Activated CD4-positive, alpha-beta T cell treated with anti-CD3 and anti-CD28 coated beads for 36 hours (primary cell): ENCODE measurements at regions of chr6 and their contacts with region 1.

Region 1: DNA sequence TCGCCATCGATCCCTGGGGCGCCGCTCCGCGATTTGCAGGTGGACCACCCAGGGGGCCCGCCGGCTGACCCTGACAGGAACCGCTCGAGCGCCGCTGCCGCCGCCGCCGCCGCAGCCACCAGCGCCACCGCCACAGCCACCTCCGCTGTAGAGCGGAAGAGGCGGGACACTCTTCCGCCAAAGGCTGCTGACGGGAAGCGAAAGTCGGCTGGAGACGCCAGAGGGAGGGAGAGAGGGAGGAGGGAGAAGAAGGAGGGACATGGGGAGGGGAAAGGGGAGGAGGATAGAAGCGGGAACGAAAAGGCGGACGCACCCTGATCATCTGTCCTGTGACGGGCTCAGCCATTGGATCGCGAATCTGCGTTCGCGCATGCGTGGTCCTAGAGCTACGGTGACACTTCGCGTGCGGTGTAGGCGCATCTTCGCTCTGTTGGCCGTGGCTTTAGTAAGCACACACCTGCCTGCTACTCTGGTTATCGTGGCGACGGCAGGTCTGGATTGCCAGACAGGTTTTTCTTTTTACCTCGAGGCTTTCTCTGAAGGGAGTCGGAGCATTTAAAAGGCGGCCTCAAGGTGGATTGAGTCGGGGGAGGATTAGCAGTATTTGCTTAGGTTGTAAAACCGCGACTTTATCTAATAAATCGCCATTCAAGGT is at the start of gene TMEM30A:
- DNase-seq: peak; percentile 98
- ATAC-seq: peak; percentile 97
- H3K4me3 Mint-ChIP-seq: no peak within 1 kb of the TSS
- H3K27ac Mint-ChIP-seq: no peak within 1 kb of the TSS
- H3K4me1 Mint-ChIP-seq: peaks cover 48% of the 10 kb centered on the region
- H3K27me3 Mint-ChIP-seq: no peaks in the 10 kb centered on the region
- total RNA-seq, gene TMEM30A: 23.4 to 44.3 TPM

Region 2: GRCh38 chr6:73580247-73581149 is 1704.3 kb before region 1 on chr6:
- CTCF ChIA-PET with region 1: no interaction called
- POLR2A ChIA-PET with region 1: no interaction called
- intact Hi-C with region 1: loop called in 1 of 2 experiments (anchors 10 kb)
- DNase-seq: peak; percentile 89
- ATAC-seq: peak; percentile 92
- H3K4me3 Mint-ChIP-seq: peak overlapping the region; percentile 60
- H3K27ac Mint-ChIP-seq: peak overlapping the region; percentile 99
- H3K4me1 Mint-ChIP-seq: peaks cover 29% of the 10 kb centered on the region
- H3K27me3 Mint-ChIP-seq: no peaks in the 10 kb centered on the region

Region 3: DNA sequence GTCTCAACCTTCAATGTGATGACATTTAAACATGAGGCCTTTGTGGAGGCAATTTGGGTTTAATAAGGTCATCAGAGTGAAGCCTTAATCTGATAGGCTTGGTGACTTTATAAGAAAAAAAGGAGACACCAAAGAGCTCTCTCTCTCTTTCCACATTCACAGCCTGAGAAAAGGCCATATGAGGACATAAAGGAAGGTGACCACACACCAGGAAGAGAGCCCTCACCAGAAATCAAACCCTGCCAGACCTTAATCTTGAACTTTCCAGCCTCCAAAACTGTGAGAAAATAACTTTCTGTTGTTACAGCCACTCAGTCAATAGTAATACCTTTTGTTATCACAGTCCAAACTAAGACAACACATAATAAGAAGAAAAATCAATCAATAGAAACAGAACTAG is 126.6 kb before region 1 on chr6:
- CTCF ChIA-PET with region 1: no interaction called
- POLR2A ChIA-PET with region 1: no interaction called
- intact Hi-C with region 1: no loop called
- DNase-seq: no peak
- ATAC-seq: no peak
- H3K4me3 Mint-ChIP-seq: no peak overlapping the region
- H3K27ac Mint-ChIP-seq: no peak overlapping the region
- H3K4me1 Mint-ChIP-seq: no peaks in the 10 kb centered on the region
- H3K27me3 Mint-ChIP-seq: peaks cover 7% of the 10 kb centered on the region

Region 4: GRCh38 chr6:75243333-75244062 is 41.3 kb before region 1 on chr6 and contains the start of gene COX7A2:
- CTCF ChIA-PET with region 1: interaction called, 3 read pairs
- POLR2A ChIA-PET with region 1: interaction called, 7 read pairs
- intact Hi-C with region 1: loop called (anchors 1 kb)
- DNase-seq: peak; percentile 91
- ATAC-seq: peak; percentile 97
- H3K4me3 Mint-ChIP-seq: peak within 1 kb of the TSS; percentile 91
- H3K27ac Mint-ChIP-seq: peak within 1 kb of the TSS; percentile 95
- H3K4me1 Mint-ChIP-seq: peaks cover 35% of the 10 kb centered on the region
- H3K27me3 Mint-ChIP-seq: peaks cover 12% of the 10 kb centered on the region
- total RNA-seq, gene COX7A2: 468 to 520 TPM

Region 5: DNA sequence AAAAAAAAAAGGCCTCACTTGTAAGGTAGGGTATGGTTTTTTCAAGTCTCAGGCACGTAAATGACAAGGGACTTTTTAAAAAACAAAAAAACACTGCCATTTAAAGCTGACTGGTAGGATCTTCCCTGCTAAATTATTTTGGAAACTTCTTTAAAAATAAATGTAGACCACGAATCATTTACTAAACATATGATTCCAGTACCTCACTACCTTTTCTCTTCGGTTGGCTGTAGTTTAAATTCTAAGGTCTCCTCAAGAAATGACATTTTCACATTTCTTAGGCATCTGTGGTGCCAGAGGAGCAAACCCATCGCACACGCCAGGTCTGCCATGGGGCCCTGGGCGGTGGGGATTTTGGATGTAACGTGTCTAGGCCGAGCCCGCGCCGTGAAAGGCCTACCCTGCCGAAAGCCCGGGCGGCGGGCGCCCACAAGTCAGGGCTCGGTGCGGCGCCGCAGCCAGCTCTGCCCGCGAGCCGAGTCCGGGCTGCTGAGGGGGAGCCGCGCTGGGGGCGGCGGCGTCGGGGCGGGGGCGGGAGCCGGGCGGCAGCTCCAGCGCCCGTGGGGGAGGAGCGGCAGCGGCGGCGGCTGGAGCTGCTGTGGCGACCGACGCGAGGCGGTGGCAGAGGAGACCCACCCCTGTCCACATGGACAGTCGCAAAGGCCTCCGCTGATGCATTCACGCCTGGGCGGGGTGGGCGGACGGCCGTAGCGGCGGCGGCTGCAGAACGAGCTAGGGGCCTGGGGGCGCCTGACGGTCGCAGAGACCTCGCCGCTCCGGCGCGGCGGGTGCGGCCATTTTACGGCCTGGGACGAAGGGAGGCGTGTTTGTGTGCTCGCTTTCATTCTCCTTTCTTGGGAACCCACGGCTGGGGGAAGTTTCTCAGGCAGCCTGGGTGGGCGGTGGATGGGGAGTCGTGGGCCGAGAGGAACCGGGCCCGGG is 316.8 kb after region 1 on chr6 and contains the start of gene SENP6:
- CTCF ChIA-PET with region 1: interaction called, 3 read pairs
- POLR2A ChIA-PET with region 1: no interaction called
- intact Hi-C with region 1: loop called (anchors 1 to 2 kb)
- DNase-seq: peak; percentile 81
- ATAC-seq: peak; percentile 72
- H3K4me3 Mint-ChIP-seq: peak within 1 kb of the TSS; percentile 88
- H3K27ac Mint-ChIP-seq: peak within 1 kb of the TSS; percentile 99
- H3K4me1 Mint-ChIP-seq: peaks cover 55% of the 10 kb centered on the region
- H3K27me3 Mint-ChIP-seq: no peaks in the 10 kb centered on the region
- total RNA-seq, gene SENP6: 69.5 to 75.1 TPM

Region 6: DNA sequence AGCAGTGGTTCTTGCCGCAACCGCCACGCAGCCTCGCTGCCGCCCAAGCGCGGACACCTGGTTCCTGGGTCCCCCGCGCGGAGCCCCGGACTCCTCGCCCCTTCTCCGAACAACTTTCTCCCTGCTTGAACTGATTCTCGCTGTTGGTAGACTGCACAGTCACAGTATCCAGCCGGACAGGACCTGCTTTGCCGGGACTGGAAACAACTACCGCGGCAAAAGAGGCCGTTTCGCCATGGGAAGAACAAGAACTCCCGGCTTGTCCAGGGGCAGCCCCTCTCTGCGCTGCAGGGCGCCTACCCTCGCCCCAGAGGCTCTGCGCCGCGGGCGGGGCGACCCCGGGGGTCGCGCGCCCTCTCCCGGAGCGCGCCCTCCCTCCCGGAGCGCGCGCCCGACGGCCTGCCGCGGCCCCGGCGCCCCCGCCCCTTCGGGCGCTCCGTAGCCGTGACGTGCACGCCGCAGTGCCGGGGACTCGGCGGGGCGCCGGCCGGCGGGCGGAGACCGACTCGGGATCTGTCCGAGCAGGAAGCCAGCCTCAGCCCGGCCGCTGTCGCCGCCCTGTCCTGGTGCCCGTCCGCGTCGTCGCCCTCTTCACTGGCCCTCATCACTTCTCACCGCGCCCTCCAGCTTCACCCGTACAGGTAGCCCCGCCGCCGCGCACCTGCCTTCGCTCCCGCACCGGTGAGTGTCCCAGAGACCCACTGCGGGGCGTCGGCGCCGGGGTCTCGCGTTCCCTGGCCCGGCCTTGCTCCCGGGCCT is 464.2 kb after region 1 on chr6 and contains the start of gene MYO6:
- CTCF ChIA-PET with region 1: no interaction called
- POLR2A ChIA-PET with region 1: no interaction called
- intact Hi-C with region 1: loop called in 1 of 2 experiments (anchors 5 kb)
- DNase-seq: peak; percentile 55
- ATAC-seq: peak; percentile 84
- H3K4me3 Mint-ChIP-seq: peak within 1 kb of the TSS; percentile 73
- H3K27ac Mint-ChIP-seq: peak within 1 kb of the TSS; percentile 53
- H3K4me1 Mint-ChIP-seq: peaks cover 6% of the 10 kb centered on the region
- H3K27me3 Mint-ChIP-seq: peaks cover 41% of the 10 kb centered on the region
- total RNA-seq, gene MYO6: 1.1 to 1.3 TPM